PC-3 (cell line): ENCODE measurements at regions of chr6 and their contacts with region 1.

Region 1: GRCh38 chr6:48111143-48111506 is at the start of gene PTCHD4:
- DNase-seq: peak; percentile 6
- ATAC-seq: no peak
- H3K4me3 ChIP-seq: no peak within 1 kb of the TSS
- H3K27ac ChIP-seq: no peak within 1 kb of the TSS
- H3K4me1 ChIP-seq: no peaks in the 10 kb centered on the region
- H3K27me3 ChIP-seq: no peaks in the 10 kb centered on the region
- CTCF ChIP-seq: no peak
- total RNA-seq, gene PTCHD4: not detected in 2 replicates

Region 2: GRCh38 chr6:48184648-48185047 is 73.5 kb after region 1 on chr6:
- CTCF ChIA-PET with region 1: no interaction called
- POLR2A ChIA-PET with region 1: no interaction called
- intact Hi-C with region 1: loop called (anchors 1 kb)
- DNase-seq: peak; percentile 68
- ATAC-seq: peak; percentile 66
- H3K4me3 ChIP-seq: peak overlapping the region; percentile 11; the same call in 1 of the 2 replicates
- H3K27ac ChIP-seq: peak overlapping the region; percentile 68
- H3K4me1 ChIP-seq: peaks cover 32% of the 10 kb centered on the region
- H3K27me3 ChIP-seq: no peaks in the 10 kb centered on the region
- CTCF ChIP-seq: no peak